ENCODE measurements at regions of chr20 and their contacts with region 1.

Region 1: DNA sequence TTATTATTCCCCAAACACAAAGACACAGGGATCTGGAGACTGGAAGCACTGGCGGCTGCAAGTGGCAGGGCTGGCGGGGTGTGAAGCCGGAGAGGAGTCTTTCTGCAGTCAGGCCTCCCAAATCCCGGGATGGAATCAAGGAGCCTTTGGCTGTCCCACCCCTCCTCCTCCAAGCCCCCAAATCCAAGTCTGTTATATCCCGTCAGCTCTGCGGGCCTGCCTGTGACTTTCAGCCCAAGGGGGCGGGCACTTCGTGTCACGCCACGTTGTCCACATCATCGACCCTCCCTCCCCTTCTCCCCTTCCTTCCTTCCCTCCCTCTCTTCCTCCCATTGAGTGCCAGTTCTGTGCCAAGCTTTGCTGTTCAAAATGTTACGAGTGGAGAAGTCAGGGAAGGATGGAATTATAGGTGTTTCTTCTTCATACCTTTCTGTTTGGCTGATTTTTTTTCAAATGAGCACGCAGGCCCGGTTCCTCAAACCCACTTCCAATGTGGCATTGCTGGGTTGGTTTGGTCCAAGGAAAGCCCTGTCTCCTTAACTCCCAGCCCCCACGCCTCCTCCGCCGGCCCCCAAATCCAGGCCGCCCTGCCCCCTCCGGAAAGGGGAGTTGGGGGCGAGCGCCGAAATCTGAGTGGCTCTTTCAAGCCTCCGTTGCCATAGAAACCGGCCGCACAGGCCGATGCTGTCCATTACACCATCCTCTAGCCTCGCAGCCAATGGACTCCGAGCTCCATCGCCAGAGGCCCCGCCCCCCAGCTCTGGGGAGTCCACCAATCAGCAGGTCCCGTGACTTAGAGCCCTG is 12.7 kb downstream of the ZCCHC3 start:
- DNase-seq: peak; percentile 97 to 99
- H3K4me3 ChIP-seq: peak overlapping the region; percentile 50 to 66
- H3K27ac ChIP-seq: peak overlapping the region; percentile 89 to 95
- H3K4me1 ChIP-seq: no peaks in the 10 kb centered on the region
- H3K27me3 ChIP-seq: no peaks in the 10 kb centered on the region
- CTCF ChIP-seq: no peak

Region 2: DNA sequence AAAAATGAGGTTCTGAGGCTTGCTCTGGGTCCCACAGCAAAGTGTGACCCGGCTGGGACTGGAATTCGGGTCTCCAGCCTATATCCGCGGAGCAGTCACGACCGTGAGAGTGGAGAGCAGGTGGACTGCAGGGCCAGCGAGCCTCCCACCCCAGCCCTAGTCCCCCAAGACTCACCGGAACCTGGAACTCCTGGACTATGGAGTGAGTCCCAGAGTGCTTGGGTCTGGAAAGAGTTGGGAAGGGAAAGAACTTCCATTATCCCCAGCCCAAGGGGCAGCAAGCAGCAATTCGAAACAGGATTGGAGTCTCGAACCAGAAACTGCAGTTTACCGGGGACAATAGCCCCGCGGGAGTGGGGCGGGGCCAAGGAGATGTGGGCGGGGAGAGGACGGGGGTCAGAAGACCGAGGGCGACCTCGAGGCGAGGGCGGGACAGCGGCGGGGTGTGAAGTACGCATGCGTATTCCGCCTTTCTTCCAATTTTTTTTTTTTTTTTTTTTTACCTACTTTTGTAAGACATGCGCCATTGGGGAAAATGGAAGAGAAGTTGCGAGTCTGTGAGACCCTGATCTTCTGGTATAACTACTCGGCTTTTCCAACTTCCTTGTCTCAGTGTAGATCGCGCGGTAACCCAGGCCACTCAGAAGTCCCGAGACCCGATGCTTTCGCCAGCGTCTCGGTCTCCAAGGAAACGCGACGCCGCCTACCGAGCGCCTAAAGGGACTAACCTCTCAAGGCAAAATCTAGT is 19.8 kb before region 1 on chr20 and contains the start of gene C20orf96:
- intact Hi-C with region 1: loop called (anchors 1 kb)
- DNase-seq: peak; percentile 56 to 93
- H3K4me3 ChIP-seq: peak within 1 kb of the TSS; percentile 77 to 79
- H3K27ac ChIP-seq: peak within 1 kb of the TSS; percentile 69 to 71
- H3K4me1 ChIP-seq: peaks cover 5 to 9% of the 10 kb centered on the region in 2 donors
- H3K27me3 ChIP-seq: no peaks in the 10 kb centered on the region
- CTCF ChIP-seq: peak; percentile 35 to 54 (median 41)
- total RNA-seq, gene C20orf96: 0.32 TPM

Measured in ascending aorta (tissue), 2 donors.